Activated naive CD4-positive, alpha-beta T cell treated with anti-CD3 and anti-CD28 coated beads for 36 hours (primary cell): ENCODE measurements at regions of chr14 and their contacts with region 1.

Region 1: GRCh38 chr14:61269321-61270083 is 11.6 kb downstream of the TMEM30B start:
- DNase-seq: peak; percentile 91
- H3K4me3 Mint-ChIP-seq: peak overlapping the region; percentile 67
- H3K27ac Mint-ChIP-seq: no peak overlapping the region
- H3K4me1 Mint-ChIP-seq: no peaks in the 10 kb centered on the region
- H3K27me3 Mint-ChIP-seq: peaks cover 10% of the 10 kb centered on the region

Region 2: DNA sequence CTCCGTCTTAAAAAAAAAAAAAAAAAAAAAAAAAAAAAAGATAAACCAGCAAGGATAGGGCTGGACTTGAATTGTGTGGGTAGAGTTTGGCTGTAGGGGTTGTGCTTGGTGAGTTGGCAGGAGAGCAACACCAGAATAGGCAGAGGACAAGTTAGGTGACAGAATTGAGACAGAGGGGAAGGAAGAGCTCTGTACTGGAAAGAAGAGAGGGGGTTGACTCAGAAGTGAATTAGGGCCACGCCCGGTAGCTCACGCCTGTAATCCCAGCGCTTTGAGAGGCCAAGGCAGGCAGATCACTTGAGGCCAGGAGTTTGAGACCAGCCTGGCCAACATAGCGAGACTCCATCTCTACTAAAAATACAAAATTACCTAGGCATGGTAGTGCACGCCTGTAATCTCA is 17.7 kb after region 1 on chr14:
- CTCF ChIA-PET with region 1: interaction called, 44 read pairs
- intact Hi-C with region 1: loop called (anchors 1 kb)
- DNase-seq: no peak
- H3K4me3 Mint-ChIP-seq: no peak overlapping the region
- H3K27ac Mint-ChIP-seq: no peak overlapping the region
- H3K4me1 Mint-ChIP-seq: peaks cover 14% of the 10 kb centered on the region
- H3K27me3 Mint-ChIP-seq: no peaks in the 10 kb centered on the region

Region 3: GRCh38 chr14:61561657-61562276 is 292.3 kb after region 1 on chr14:
- CTCF ChIA-PET with region 1: no interaction called
- intact Hi-C with region 1: no loop called
- DNase-seq: no peak
- H3K4me3 Mint-ChIP-seq: no peak overlapping the region
- H3K27ac Mint-ChIP-seq: peak overlapping the region; percentile 75
- H3K4me1 Mint-ChIP-seq: peaks cover 73% of the 10 kb centered on the region
- H3K27me3 Mint-ChIP-seq: no peaks in the 10 kb centered on the region

Region 4: GRCh38 chr14:61803755-61804154 is 534.3 kb after region 1 on chr14:
- CTCF ChIA-PET with region 1: no interaction called
- intact Hi-C with region 1: no loop called
- DNase-seq: no peak
- H3K4me3 Mint-ChIP-seq: no peak overlapping the region
- H3K27ac Mint-ChIP-seq: no peak overlapping the region
- H3K4me1 Mint-ChIP-seq: no peaks in the 10 kb centered on the region
- H3K27me3 Mint-ChIP-seq: no peaks in the 10 kb centered on the region